Dorsolateral prefrontal cortex (tissue), 120 donors: ENCODE measurements at regions of chr22 and their contacts with region 1.

Region 1: GRCh38 chr22:41517172-41518047 is 26.9 kb downstream of the POLR3H start:
- DNase-seq: peak in 9 of 10 donors; percentile 74 to 90 (median 86)
- H3K4me3 ChIP-seq: peak overlapping the region in 8 of 59 donors; percentile 12 to 33 (median 23)
- H3K27ac ChIP-seq: peak overlapping the region; percentile 22 to 100 (median 97)
- H3K27me3 ChIP-seq: no peaks in the 10 kb centered on the region
- CTCF ChIP-seq: peak; percentile 82 to 97 (median 92)

Region 2: DNA sequence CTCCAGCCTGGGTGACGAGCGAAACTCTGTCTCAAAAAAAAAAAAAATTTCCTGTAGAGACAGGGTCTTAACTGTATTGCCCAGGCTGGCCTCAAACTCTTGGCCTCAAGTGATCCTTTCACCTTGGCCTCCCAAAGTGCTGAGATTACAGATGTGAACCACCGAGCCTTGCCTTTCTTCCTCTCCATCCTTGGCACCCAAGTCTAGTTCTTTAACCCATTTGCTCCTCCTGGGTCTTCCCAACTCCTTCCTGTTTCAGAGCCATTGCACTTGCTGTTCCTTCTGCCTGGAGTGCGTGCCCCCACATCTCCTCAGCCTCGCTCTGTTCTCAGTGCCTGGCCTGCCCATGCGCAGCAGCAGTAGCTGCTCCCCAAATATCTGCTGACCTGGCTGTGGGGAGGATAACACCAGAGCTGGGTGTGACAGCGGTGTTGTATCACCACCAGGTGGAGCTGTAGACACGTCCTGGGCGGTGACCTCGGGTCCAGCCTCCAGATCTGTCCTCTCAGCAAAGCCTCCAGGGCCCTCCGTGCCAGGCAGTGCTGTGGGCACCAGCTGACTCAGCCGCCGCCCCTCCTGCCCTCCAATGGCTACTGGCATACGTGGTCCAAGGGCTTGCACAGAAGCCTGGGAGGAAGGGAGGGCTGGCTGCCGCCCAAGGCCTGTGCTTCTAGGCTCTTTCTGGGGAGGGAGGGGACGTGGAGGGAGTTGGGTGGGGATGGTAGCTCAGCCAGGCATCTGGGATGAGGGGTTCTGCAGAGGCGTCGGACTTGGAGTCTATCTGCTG is 113.7 kb before region 1 on chr22:
- intact Hi-C with region 1: loop called (anchors 2 kb)
- DNase-seq: peak; percentile 97 to 100 (median 98)
- H3K4me3 ChIP-seq: peak overlapping the region in 19 of 59 donors; percentile 2 to 38 (median 12)
- H3K27ac ChIP-seq: peak overlapping the region; percentile 86 to 100 (median 98)
- H3K27me3 ChIP-seq: no peaks in the 10 kb centered on the region
- CTCF ChIP-seq: peak; percentile 92 to 100 (median 99)

Region 3: DNA sequence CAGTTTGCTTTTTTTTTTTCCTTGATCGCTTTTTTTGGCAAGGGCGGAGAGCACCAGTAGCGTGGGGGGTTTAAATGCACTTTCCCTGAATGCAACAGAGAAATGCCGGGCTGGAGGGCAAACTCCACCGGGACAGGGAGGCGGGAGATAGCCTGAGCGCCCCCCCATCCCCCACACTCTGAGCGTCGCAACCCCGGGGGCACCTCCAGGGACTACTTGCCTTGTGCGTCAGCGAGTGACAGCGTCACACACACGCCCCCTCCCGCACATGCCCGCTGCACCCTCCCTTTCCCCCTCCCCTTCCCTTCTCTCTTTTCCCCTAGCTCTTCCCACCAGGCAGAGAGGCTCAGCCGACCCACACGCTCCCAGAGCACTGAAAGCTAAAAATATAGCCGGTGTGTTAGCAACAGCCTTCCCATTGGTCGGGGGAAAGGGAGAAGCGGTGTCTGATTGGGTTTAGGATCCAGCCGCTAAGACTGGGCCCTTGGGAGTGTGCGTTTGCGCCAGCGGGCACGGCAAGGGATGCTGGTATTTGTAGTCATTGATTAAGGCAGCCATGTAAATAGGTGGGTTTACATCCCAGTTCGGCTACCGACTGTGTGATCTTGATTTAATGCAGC is 69.1 kb before region 1 on chr22:
- intact Hi-C with region 1: loop called (anchors 2 to 5 kb)
- DNase-seq: peak; percentile 90 to 99 (median 98)
- H3K4me3 ChIP-seq: peak overlapping the region; percentile 71 to 100 (median 98)
- H3K27ac ChIP-seq: peak overlapping the region; percentile 97 to 100 (median 100)
- H3K27me3 ChIP-seq: no peaks in the 10 kb centered on the region
- CTCF ChIP-seq: peak in 9 of 56 donors; percentile 9 to 39 (median 20)

Region 4: DNA sequence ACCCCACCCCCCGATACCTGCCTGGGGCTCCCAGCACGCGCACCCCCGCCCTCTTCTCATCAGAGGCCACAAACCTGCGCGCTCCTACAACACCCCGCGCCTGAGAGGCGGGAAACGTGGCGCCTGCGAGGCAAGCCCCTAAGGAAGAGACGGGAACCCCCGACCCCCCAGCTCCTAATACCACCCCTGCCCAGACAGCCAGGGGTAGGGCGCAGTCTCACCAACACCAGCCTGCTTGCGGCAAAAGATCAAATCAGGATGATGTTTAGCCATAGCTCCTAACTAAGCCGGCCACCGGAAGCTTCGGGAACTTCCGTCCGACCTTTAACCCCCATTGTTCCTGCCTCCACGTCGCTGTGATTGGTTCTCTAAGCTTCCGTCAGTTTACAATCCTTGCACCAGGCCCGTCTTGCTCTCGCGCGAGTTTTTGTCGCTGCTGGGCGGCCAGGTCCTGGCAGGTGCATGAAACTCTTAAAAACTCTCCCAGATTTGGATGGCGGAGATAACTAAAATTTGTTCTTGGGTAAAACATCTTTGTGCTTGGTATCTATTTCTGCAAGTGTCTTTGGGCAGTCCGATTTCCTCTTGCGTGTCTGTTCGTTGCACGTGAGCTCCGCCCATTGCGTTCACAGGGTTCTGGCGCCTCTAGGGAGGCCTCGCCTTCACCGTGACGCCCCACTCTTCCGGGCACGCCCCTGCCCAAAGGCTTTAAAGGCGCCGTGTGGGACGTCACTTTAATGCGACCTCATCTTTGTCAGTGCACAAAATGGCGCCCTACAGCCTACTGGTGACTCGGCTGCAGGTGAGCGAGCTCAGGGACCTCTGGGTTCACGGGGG is 48.8 kb before region 1 on chr22 and contains the starts of genes ACO2 and PHF5A:
- intact Hi-C with region 1: loop called in 1 of 2 experiments (anchors 5 kb)
- DNase-seq: peak; percentile 96 to 99 (median 98)
- H3K4me3 ChIP-seq: peak within 1 kb of the TSS; percentile 69 to 100 (median 98)
- H3K27ac ChIP-seq: peak within 1 kb of the TSS; percentile 85 to 99 (median 97)
- H3K27me3 ChIP-seq: no peaks in the 10 kb centered on the region
- CTCF ChIP-seq: peak in 31 of 56 donors; percentile 5 to 53 (median 28)
- total RNA-seq, gene ACO2: 173 to 339 (median 261) TPM
- total RNA-seq, gene PHF5A: 10.3 to 36.8 (median 22.3) TPM

Region 5: GRCh38 chr22:41479671-41480396 is 37.6 kb before region 1 on chr22:
- intact Hi-C with region 1: loop called in 1 of 2 experiments (anchors 5 kb)
- DNase-seq: peak in 9 of 10 donors; percentile 43 to 70 (median 61)
- H3K4me3 ChIP-seq: peak overlapping the region in 40 of 59 donors; percentile 0 to 38 (median 18)
- H3K27ac ChIP-seq: peak overlapping the region; percentile 57 to 98 (median 91)
- H3K27me3 ChIP-seq: no peaks in the 10 kb centered on the region
- CTCF ChIP-seq: peak in 1 of 56 donors; percentile 7